ENCODE measurements at regions of chr19 and their contacts with region 1.

Region 1: DNA sequence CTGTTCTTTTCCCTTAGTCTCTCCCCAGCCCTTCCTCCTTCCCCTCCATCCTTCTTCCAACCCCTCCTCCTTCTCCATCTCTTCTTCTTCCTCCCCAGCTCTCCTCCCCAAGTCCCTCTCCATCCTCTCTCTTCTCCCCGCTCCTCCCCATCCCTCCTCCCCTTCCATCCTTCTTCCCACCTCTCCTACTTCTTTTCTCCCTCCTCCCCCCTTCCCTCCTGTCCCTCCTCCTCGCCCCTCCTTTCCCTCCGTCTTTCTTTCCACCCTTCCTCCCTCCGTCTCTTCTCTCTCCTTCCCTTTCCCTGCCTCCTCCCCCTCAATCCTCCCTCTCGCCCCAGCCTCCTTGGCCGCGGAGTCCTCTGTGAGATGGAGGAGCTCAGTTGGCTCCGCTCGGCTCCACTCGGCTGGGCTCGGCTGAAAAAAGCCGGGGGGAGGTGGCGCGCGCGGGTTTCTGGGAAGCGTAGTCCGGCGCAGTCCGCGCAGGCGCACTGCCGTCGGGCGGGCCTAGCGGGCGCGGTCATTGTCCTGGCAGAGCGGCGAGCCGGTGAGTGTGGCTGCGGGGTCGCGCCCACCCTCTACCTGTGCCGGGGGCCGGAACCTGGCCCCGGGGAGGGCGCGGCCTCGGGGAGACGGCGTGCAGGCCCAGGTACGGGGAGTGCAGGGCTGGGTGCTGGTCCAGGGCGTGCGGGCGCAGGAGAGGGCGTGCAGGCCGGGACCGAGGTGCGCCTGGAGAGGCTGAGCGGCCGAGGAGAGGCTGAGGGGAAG is at the start of gene ZNF71:
- DNase-seq: peak; percentile 75 to 89 (median 81)
- ATAC-seq: peak; percentile 96
- H3K4me3 ChIP-seq: peak within 1 kb of the TSS; percentile 57
- H3K4me3 Mint-ChIP-seq: peak within 1 kb of the TSS; percentile 83 to 99 (median 90)
- H3K27ac ChIP-seq: peak within 1 kb of the TSS; percentile 71
- H3K27ac Mint-ChIP-seq: peak within 1 kb of the TSS; percentile 72 to 94 (median 86)
- H3K4me1 ChIP-seq: peaks cover 0 to 3% of the 10 kb centered on the region in 2 donors
- H3K4me1 Mint-ChIP-seq: peaks cover 19 to 30% (median 21%) of the 10 kb centered on the region in 7 donors
- H3K27me3 ChIP-seq: no peaks in the 10 kb centered on the region
- H3K27me3 Mint-ChIP-seq: no peaks in the 10 kb centered on the region
- total RNA-seq, gene ZNF71: 4.5 to 7.7 (median 6.6) TPM

Region 2: DNA sequence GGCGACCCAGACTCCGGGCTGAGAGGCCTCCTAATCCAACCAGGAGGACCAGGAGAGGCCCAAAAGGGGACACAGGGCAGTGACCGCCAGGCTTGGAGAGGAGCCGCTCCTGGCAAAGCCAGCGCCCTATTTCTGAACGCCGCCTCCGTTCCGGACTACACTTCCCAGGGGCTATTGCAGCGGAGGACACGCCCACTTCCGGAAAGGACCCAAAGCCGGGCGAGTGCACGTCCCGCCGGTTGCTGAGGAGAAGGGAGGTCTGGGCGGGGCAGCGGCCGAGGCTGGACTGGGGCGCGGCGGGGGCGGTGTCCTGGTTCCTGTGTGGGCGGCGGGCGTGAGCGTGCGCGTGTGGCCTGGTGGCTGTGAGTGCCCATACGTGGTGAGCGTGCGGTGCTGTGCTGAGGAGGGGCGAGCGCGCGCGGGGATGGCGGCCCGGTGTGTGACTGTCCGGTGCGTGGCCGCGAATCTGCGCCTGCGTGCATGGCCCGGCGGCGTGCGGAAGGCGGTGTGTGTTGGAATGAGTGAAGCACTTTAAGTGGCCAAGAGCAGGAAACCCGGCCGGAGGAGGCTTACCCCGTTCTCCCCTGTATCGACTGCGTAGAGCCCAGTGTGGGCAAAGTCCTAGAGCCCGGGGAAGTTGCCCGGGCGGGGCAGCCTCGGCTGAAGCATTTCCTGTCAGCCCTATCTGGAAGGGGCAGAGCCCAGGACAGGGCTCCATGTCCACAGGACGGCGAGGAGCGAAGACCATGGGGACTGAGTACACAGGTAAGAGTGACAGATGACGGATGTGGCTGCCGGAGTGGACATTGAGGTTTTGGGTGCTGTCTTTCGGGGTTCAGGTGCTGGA is 27.5 kb before region 1 on chr19 and contains the start of gene ZNF470:
- CTCF ChIA-PET with region 1: no interaction called
- POLR2A ChIA-PET with region 1: interaction called, 4 read pairs
- intact Hi-C with region 1: loop called (anchors 1 kb)
- DNase-seq: peak; percentile 73 to 86 (median 80)
- ATAC-seq: peak; percentile 98
- H3K4me3 ChIP-seq: peak within 1 kb of the TSS; percentile 86
- H3K4me3 Mint-ChIP-seq: peak within 1 kb of the TSS; percentile 89 to 98 (median 96)
- H3K27ac ChIP-seq: peak within 1 kb of the TSS; percentile 77
- H3K27ac Mint-ChIP-seq: peak within 1 kb of the TSS; percentile 59 to 91 (median 84)
- H3K4me1 ChIP-seq: peaks cover 0 to 9% of the 10 kb centered on the region in 2 donors
- H3K4me1 Mint-ChIP-seq: peaks cover 10 to 25% (median 13%) of the 10 kb centered on the region in 7 donors
- H3K27me3 ChIP-seq: no peaks in the 10 kb centered on the region
- H3K27me3 Mint-ChIP-seq: no peaks in the 10 kb centered on the region
- total RNA-seq, gene ZNF470: 0.98 to 5.9 (median 2.4) TPM

Region 3: DNA sequence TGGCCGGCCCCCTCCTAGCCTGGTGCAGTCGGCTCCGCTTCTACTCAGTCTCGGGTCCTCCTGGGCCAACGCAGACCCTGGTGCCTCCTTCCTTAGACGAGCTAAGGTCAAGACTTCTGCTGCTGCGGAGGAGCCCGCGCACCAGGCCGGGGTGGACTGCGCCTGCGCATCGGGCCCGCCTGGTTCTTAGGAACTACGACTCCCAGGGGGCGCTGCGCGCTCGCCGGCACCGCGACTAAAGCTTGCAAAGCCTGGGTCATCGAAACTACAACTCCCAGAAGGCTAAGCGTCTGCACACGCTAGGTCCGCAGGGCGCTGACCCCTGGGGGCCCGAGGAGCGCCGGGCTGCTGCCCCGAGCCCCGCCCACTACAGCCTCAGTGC is 76.6 kb after region 1 on chr19 and contains the start of gene ZNF835:
- CTCF ChIA-PET with region 1: no interaction called
- POLR2A ChIA-PET with region 1: no interaction called
- intact Hi-C with region 1: loop called in 1 of 2 experiments (anchors 1 kb)
- DNase-seq: peak; percentile 52 to 83 (median 75)
- ATAC-seq: peak; percentile 95
- H3K4me3 ChIP-seq: peak within 1 kb of the TSS; percentile 53
- H3K4me3 Mint-ChIP-seq: peak within 1 kb of the TSS; percentile 69 to 95 (median 89)
- H3K27ac ChIP-seq: peak within 1 kb of the TSS; percentile 67
- H3K27ac Mint-ChIP-seq: peak within 1 kb of the TSS in 6 of 9 donors; percentile 40 to 95 (median 80)
- H3K4me1 ChIP-seq: peaks cover 0 to 7% of the 10 kb centered on the region in 2 donors
- H3K4me1 Mint-ChIP-seq: peaks cover 0 to 17% (median 11%) of the 10 kb centered on the region in 7 donors
- H3K27me3 ChIP-seq: no peaks in the 10 kb centered on the region
- H3K27me3 Mint-ChIP-seq: no peaks in the 10 kb centered on the region
- total RNA-seq, gene ZNF835: 0.73 to 5.7 (median 1.4) TPM

Region 4: GRCh38 chr19:57191141-57192076 is 596.4 kb after region 1 on chr19 and contains the start of gene ZNF264:
- CTCF ChIA-PET with region 1: no interaction called
- POLR2A ChIA-PET with region 1: no interaction called
- intact Hi-C with region 1: loop called in 1 of 2 experiments (anchors 5 kb)
- DNase-seq: peak; percentile 79 to 90 (median 86)
- ATAC-seq: peak; percentile 98
- H3K4me3 ChIP-seq: peak within 1 kb of the TSS; percentile 95
- H3K4me3 Mint-ChIP-seq: peak within 1 kb of the TSS; percentile 90 to 97 (median 94)
- H3K27ac ChIP-seq: peak within 1 kb of the TSS; percentile 85
- H3K27ac Mint-ChIP-seq: peak within 1 kb of the TSS; percentile 92 to 97 (median 95)
- H3K4me1 ChIP-seq: peaks cover 11 to 22% of the 10 kb centered on the region in 2 donors
- H3K4me1 Mint-ChIP-seq: peaks cover 20 to 40% (median 35%) of the 10 kb centered on the region in 7 donors
- H3K27me3 ChIP-seq: no peaks in the 10 kb centered on the region
- H3K27me3 Mint-ChIP-seq: peaks cover 0 to 11% (median 6%) of the 10 kb centered on the region in 5 donors
- total RNA-seq, gene ZNF264: 31.5 to 65.9 (median 44.3) TPM

Measured in naive thymus-derived CD4-positive, alpha-beta T cell (primary cell).